Heart left ventricle (tissue), 16 donors: ENCODE measurements at regions of chrX and their contacts with region 1.

Region 1: GRCh38 chrX:57821703-57822375 is 88.4 kb downstream of the ZXDA start:
- DNase-seq: peak in 2 of 5 donors; percentile 15 to 25
- ATAC-seq: peak; percentile 55 to 83 (median 80)
- H3K4me3 ChIP-seq: peak overlapping the region in 10 of 12 donors; percentile 3 to 46 (median 32)
- H3K27ac ChIP-seq: no peak overlapping the region
- H3K4me1 ChIP-seq: no peaks in the 10 kb centered on the region
- H3K27me3 ChIP-seq: no peaks in the 10 kb centered on the region
- CTCF ChIP-seq: peak; percentile 42 to 70 (median 61)
- POLR2A ChIP-seq: no peak

Region 2: GRCh38 chrX:57573754-57574153 is 248.1 kb before region 1 on chrX:
- intact Hi-C with region 1: loop called in 1 of 10 experiments (anchors 10 kb)
- DNase-seq: no peak
- ATAC-seq: no peak
- H3K4me3 ChIP-seq: no peak overlapping the region
- H3K27ac ChIP-seq: no peak overlapping the region
- H3K4me1 ChIP-seq: no peaks in the 10 kb centered on the region
- H3K27me3 ChIP-seq: peaks cover 0 to 3% (median 0%) of the 10 kb centered on the region in 9 donors
- CTCF ChIP-seq: peak in 10 of 12 donors; percentile 9 to 52 (median 33)
- POLR2A ChIP-seq: no peak

Region 3: GRCh38 chrX:57587607-57588006 is 234.2 kb before region 1 on chrX:
- intact Hi-C with region 1: loop called in 1 of 10 experiments (anchors 10 kb)
- DNase-seq: no peak
- ATAC-seq: no peak
- H3K4me3 ChIP-seq: no peak overlapping the region
- H3K27ac ChIP-seq: no peak overlapping the region
- H3K4me1 ChIP-seq: peaks cover 0 to 10% (median 2%) of the 10 kb centered on the region in 12 donors
- H3K27me3 ChIP-seq: no peaks in the 10 kb centered on the region
- CTCF ChIP-seq: no peak
- POLR2A ChIP-seq: no peak

Region 4: GRCh38 chrX:57643698-57644097 is 178.1 kb before region 1 on chrX:
- intact Hi-C with region 1: no loop called
- DNase-seq: no peak
- ATAC-seq: no peak
- H3K4me3 ChIP-seq: no peak overlapping the region
- H3K27ac ChIP-seq: no peak overlapping the region
- H3K4me1 ChIP-seq: no peaks in the 10 kb centered on the region
- H3K27me3 ChIP-seq: peaks cover 0 to 5% (median 0%) of the 10 kb centered on the region in 9 donors
- CTCF ChIP-seq: no peak
- POLR2A ChIP-seq: no peak

Region 5: DNA sequence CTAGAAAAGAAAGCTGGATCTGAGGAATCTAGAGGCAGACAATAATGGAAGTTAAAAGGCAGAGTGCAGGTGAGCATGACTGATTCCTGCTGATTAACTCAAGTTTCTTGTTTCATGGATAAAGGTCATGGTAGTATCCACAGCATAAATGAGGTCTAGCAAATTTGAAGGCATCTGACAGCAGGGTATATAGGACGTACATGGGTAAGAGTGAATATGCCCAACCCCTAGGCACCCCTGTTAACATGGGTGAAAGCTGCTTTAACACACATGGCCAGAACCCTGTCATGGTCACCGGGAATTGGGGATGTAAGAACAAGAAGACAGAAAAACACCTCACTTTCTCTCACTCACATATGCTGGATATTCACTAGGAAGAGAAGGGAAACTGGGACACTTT is 166.8 kb before region 1 on chrX:
- intact Hi-C with region 1: no loop called
- DNase-seq: no peak
- ATAC-seq: no peak
- H3K4me3 ChIP-seq: no peak overlapping the region
- H3K27ac ChIP-seq: no peak overlapping the region
- H3K4me1 ChIP-seq: no peaks in the 10 kb centered on the region
- H3K27me3 ChIP-seq: no peaks in the 10 kb centered on the region
- CTCF ChIP-seq: no peak
- POLR2A ChIP-seq: no peak

Region 6: GRCh38 chrX:57918750-57919436 is 97.1 kb after region 1 on chrX:
- intact Hi-C with region 1: loop called in 9 of 10 experiments (anchors 1 to 5 kb)
- DNase-seq: peak in 2 of 5 donors; percentile 10 to 37
- ATAC-seq: peak in 1 of 4 donors; percentile 65
- H3K4me3 ChIP-seq: peak overlapping the region in 4 of 12 donors; percentile 9 to 26 (median 15)
- H3K27ac ChIP-seq: no peak overlapping the region
- H3K4me1 ChIP-seq: no peaks in the 10 kb centered on the region
- H3K27me3 ChIP-seq: peaks cover 0 to 8% (median 0%) of the 10 kb centered on the region in 9 donors
- CTCF ChIP-seq: peak; percentile 26 to 62 (median 49)
- POLR2A ChIP-seq: no peak

Region 7: DNA sequence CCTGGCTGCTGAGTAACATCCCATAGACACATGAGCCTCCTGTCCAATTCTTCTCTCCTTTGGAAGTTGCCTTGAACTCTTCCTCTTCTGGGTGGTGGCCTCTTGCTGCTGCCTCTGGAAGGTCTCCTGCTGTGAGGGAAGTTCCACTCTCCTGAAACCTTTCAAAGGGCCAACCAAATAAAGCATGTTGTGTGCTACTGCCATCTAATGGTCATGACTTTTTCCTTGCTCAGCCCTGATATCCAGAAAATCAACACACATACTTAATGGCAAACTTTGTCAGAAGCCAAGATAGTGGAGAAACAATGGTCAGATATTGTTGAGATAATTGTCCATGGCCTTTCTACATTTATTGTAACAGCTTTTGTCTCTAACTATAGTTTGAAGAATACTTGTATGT is 107.5 kb after region 1 on chrX:
- intact Hi-C with region 1: loop called in 3 of 10 experiments (anchors 5 kb)
- DNase-seq: no peak
- ATAC-seq: peak in 2 of 4 donors; percentile 49 to 59
- H3K4me3 ChIP-seq: no peak overlapping the region
- H3K27ac ChIP-seq: no peak overlapping the region
- H3K4me1 ChIP-seq: no peaks in the 10 kb centered on the region
- H3K27me3 ChIP-seq: peaks cover 0 to 2% (median 0%) of the 10 kb centered on the region in 9 donors
- CTCF ChIP-seq: peak in 11 of 12 donors; percentile 28 to 63 (median 46)
- POLR2A ChIP-seq: no peak

Region 8: GRCh38 chrX:57951666-57952319 is 130.0 kb after region 1 on chrX:
- intact Hi-C with region 1: no loop called
- DNase-seq: peak in 4 of 5 donors; percentile 14 to 39 (median 30)
- ATAC-seq: peak in 3 of 4 donors; percentile 52 to 84 (median 75)
- H3K4me3 ChIP-seq: no peak overlapping the region
- H3K27ac ChIP-seq: peak overlapping the region in 4 of 12 donors; percentile 8 to 46 (median 9)
- H3K4me1 ChIP-seq: no peaks in the 10 kb centered on the region
- H3K27me3 ChIP-seq: no peaks in the 10 kb centered on the region
- CTCF ChIP-seq: no peak
- POLR2A ChIP-seq: no peak

Region 9: DNA sequence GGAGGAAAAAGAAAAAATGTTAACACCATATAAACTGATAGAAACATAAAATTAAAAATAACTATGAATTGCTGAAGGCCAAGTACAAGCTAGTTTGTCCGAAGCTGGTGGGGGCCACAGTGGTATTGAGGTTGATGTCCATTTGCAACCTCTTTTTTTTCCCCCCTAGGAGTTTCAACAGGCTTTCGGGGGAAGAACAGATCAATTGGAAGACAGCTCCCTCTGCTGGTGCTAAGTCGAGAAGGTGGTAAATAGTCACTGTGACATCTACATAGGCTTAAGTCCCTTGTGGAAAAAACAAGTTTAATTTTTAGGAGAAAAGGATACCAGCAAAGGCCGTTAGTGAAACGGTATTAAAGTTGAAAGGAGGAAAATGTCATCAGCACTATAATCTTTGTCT is 204.1 kb after region 1 on chrX:
- intact Hi-C with region 1: loop called in 9 of 10 experiments (anchors 2 to 10 kb)
- DNase-seq: peak in 1 of 5 donors; percentile 15
- ATAC-seq: no peak
- H3K4me3 ChIP-seq: no peak overlapping the region
- H3K27ac ChIP-seq: no peak overlapping the region
- H3K4me1 ChIP-seq: no peaks in the 10 kb centered on the region
- H3K27me3 ChIP-seq: peaks cover 0 to 26% (median 0%) of the 10 kb centered on the region in 9 donors
- CTCF ChIP-seq: peak in 11 of 12 donors; percentile 26 to 61 (median 49)
- POLR2A ChIP-seq: no peak